Psoas muscle (tissue), 8 donors: ENCODE measurements at regions of chr15 and their contacts with region 1.

Region 1: GRCh38 chr15:86915811-86916331 is 836.2 kb downstream of the AGBL1 start:
- DNase-seq: no peak
- ATAC-seq: peak; percentile 60 to 90 (median 80)
- H3K4me3 ChIP-seq: no peak overlapping the region
- H3K27ac ChIP-seq: no peak overlapping the region
- H3K4me1 ChIP-seq: no peaks in the 10 kb centered on the region
- H3K27me3 ChIP-seq: no peaks in the 10 kb centered on the region
- CTCF ChIP-seq: peak; percentile 48

Region 2: DNA sequence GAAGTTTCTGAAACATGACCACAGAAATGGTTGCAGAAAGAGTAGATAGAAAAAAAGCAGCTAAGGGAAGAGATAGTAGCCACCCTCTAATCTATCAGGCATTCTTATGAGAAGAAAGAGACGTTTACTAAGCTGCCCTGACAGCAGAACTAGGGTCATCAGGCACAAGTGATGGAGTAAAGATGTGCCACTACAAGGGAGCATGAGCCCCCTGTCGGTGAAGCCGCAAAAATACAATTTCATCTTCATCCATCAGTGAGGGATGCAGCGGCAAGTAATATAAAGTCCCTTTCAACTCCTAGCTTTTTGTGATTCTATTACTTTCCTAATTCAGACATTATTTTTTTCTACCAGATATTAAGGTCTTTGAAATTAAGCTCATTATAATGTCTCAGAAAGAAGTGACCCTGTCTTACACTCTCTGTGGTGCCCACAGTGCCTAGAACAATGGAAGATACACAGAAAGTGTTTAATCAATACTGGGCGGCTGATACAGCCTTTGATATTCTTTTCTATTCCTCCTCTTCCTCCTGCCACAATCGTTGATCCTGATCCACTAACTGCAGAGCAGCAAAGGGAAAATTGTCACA is 689.1 kb after region 1 on chr15:
- intact Hi-C with region 1: loop called in 1 of 2 experiments (anchors 10 kb)
- DNase-seq: no peak
- ATAC-seq: peak in 2 of 4 donors; percentile 56 to 66
- H3K4me3 ChIP-seq: no peak overlapping the region
- H3K27ac ChIP-seq: no peak overlapping the region
- H3K4me1 ChIP-seq: no peaks in the 10 kb centered on the region
- H3K27me3 ChIP-seq: no peaks in the 10 kb centered on the region
- CTCF ChIP-seq: peak; percentile 48

Region 3: DNA sequence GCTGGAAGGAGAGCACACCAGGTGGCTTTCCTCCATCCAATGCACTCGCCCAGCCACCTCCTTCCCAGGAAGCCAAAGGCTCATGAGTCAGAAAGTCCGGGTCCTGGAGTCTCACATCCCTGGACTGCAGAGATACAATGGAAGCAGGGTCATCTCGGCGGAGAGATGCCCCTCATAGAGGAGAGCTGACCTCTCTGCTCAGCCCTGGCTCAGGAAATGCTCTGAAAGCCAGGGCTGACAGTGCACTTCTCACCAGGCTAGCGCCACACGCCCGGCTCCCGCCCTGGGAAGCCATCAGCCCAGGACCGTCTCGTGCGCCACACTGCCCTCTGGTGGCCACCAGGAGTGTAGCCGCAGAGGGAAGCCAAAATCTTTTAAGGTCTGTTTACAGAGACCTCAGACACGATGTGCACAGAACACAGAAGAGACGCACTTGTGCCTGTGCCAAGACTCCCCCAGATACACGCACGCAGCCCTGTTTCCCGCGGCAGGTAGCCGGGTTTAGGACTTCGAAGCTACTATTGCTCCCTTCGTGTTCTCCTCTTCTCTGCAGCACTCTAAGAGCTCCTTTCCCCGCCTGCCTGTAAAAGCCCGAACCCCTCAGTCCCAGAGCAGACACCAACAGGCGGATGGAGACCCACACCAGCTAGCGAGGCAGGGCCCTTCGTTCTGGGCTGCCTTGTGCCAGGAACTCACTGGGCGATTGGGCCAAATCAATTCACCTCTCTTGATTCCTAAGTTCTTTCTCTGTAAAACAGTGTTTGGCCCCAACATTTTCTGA is 1331.0 kb after region 1 on chr15:
- intact Hi-C with region 1: loop called (anchors 5 to 10 kb)
- DNase-seq: peak; percentile 78 to 89
- ATAC-seq: peak; percentile 87 to 96 (median 92)
- H3K4me3 ChIP-seq: no peak overlapping the region
- H3K27ac ChIP-seq: no peak overlapping the region
- H3K4me1 ChIP-seq: peaks cover 10% of the 10 kb centered on the region
- H3K27me3 ChIP-seq: no peaks in the 10 kb centered on the region
- CTCF ChIP-seq: peak; percentile 97

Region 4: GRCh38 chr15:88274553-88275460 is 1358.9 kb after region 1 on chr15:
- intact Hi-C with region 1: loop called in 1 of 2 experiments (anchors 10 kb)
- DNase-seq: peak; percentile 55 to 73
- ATAC-seq: peak; percentile 76 to 79 (median 77)
- H3K4me3 ChIP-seq: no peak overlapping the region
- H3K27ac ChIP-seq: no peak overlapping the region
- H3K4me1 ChIP-seq: no peaks in the 10 kb centered on the region
- H3K27me3 ChIP-seq: no peaks in the 10 kb centered on the region
- CTCF ChIP-seq: peak; percentile 83